Left ventricle myocardium inferior (tissue), 1 donor: ENCODE measurements at regions of chr2 and their contacts with region 1.

Region 1: GRCh38 chr2:209334198-209335017 is 89.4 kb upstream of the MAP2 start:
- DNase-seq: peak; percentile 24
- H3K4me3 ChIP-seq: no peak overlapping the region
- H3K27ac ChIP-seq: no peak overlapping the region
- H3K4me1 ChIP-seq: peaks cover 5% of the 10 kb centered on the region
- H3K27me3 ChIP-seq: peaks cover 6% of the 10 kb centered on the region
- CTCF ChIP-seq: peak; percentile 95

Region 2: DNA sequence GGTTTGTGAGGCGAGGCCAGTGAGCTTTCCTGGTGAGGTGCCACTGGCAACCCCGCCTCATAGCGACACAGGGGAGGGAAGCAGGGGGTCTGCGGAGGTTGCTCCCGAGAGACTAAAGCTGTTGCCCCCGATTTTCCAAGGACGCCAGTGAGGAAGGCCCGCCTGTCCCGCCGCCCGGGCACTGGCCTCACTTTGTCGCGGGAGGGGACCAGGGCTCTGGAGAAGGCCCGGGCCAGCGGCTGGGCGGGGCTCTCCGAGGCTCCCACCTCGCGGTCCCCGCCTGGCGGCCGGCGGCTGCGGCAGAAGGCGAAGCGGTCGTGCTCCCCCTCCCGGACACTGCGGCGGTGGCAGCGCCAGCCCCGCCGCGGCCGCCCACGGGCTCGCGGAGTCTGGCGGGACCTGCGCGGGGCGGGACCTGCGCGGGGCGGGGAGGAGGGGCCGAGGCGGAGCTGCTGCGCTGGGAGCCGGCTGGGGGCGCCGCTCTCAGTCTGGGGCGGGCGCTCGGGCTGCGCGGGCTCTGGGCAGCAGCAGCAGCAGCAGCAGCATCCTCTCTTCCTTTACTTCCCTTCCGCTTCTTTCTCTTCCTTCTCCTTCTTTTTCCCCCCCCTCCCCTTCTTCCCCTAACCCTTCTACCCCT is 89.3 kb after region 1 on chr2 and contains the start of gene MAP2:
- intact Hi-C with region 1: loop called (anchors 10 kb)
- DNase-seq: peak; percentile 80
- H3K4me3 ChIP-seq: peak within 1 kb of the TSS; percentile 78
- H3K27ac ChIP-seq: peak within 1 kb of the TSS; percentile 59
- H3K4me1 ChIP-seq: peaks cover 26% of the 10 kb centered on the region
- H3K27me3 ChIP-seq: no peaks in the 10 kb centered on the region
- CTCF ChIP-seq: peak; percentile 97
- total RNA-seq, gene MAP2: 6.2 TPM

Region 3: GRCh38 chr2:209556354-209556961 is 222.1 kb after region 1 on chr2:
- intact Hi-C with region 1: loop called (anchors 2 kb)
- DNase-seq: no peak
- H3K4me3 ChIP-seq: no peak overlapping the region
- H3K27ac ChIP-seq: no peak overlapping the region
- H3K4me1 ChIP-seq: no peaks in the 10 kb centered on the region
- H3K27me3 ChIP-seq: no peaks in the 10 kb centered on the region
- CTCF ChIP-seq: peak; percentile 67

Region 4: GRCh38 chr2:209960676-209961630 is 626.5 kb after region 1 on chr2:
- intact Hi-C with region 1: loop called (anchors 10 kb)
- DNase-seq: peak; percentile 18
- H3K4me3 ChIP-seq: no peak overlapping the region
- H3K27ac ChIP-seq: no peak overlapping the region
- H3K4me1 ChIP-seq: no peaks in the 10 kb centered on the region
- H3K27me3 ChIP-seq: no peaks in the 10 kb centered on the region
- CTCF ChIP-seq: peak; percentile 77